ENCODE measurements at regions of chr15 and their contacts with region 1.

Region 1: GRCh38 chr15:40694688-40695468 is at the start of gene RAD51:
- DNase-seq: peak; percentile 77 to 94 (median 92)
- H3K4me3 ChIP-seq: peak within 1 kb of the TSS; percentile 63 to 99 (median 91)
- H3K27ac ChIP-seq: peak within 1 kb of the TSS; percentile 90 to 100 (median 99)
- H3K27me3 ChIP-seq: no peaks in the 10 kb centered on the region
- CTCF ChIP-seq: peak in 11 of 56 donors; percentile 8 to 31 (median 14)
- total RNA-seq, gene RAD51: 0.23 to 3.8 (median 0.87) TPM in 85 of 120 experiments, not detected in the others

Region 2: GRCh38 chr15:40564591-40565332 is 130.1 kb before region 1 on chr15 and contains the start of gene CCDC32:
- intact Hi-C with region 1: loop called in 1 of 2 experiments (anchors 2 kb)
- DNase-seq: peak; percentile 98 to 100 (median 100)
- H3K4me3 ChIP-seq: peak within 1 kb of the TSS; percentile 61 to 99 (median 86)
- H3K27ac ChIP-seq: peak within 1 kb of the TSS in 57 of 59 donors; percentile 32 to 94 (median 85)
- H3K27me3 ChIP-seq: no peaks in the 10 kb centered on the region
- CTCF ChIP-seq: peak in 24 of 56 donors; percentile 8 to 64 (median 26)
- total RNA-seq, gene CCDC32: 15.7 to 49.5 (median 30.0) TPM

Region 3: GRCh38 chr15:40722934-40723333 is 28.1 kb after region 1 on chr15:
- intact Hi-C with region 1: no loop called
- DNase-seq: no peak
- H3K4me3 ChIP-seq: no peak overlapping the region
- H3K27ac ChIP-seq: no peak overlapping the region
- H3K27me3 ChIP-seq: no peaks in the 10 kb centered on the region
- CTCF ChIP-seq: no peak

Region 4: GRCh38 chr15:40746916-40747514 is 52.1 kb after region 1 on chr15:
- intact Hi-C with region 1: loop called in 1 of 2 experiments (anchors 5 kb)
- DNase-seq: no peak
- H3K4me3 ChIP-seq: no peak overlapping the region
- H3K27ac ChIP-seq: peak overlapping the region in 7 of 59 donors; percentile 22 to 67 (median 27)
- H3K27me3 ChIP-seq: no peaks in the 10 kb centered on the region
- CTCF ChIP-seq: no peak